ENCODE measurements at regions of chr15 and their contacts with region 1.

Region 1: DNA sequence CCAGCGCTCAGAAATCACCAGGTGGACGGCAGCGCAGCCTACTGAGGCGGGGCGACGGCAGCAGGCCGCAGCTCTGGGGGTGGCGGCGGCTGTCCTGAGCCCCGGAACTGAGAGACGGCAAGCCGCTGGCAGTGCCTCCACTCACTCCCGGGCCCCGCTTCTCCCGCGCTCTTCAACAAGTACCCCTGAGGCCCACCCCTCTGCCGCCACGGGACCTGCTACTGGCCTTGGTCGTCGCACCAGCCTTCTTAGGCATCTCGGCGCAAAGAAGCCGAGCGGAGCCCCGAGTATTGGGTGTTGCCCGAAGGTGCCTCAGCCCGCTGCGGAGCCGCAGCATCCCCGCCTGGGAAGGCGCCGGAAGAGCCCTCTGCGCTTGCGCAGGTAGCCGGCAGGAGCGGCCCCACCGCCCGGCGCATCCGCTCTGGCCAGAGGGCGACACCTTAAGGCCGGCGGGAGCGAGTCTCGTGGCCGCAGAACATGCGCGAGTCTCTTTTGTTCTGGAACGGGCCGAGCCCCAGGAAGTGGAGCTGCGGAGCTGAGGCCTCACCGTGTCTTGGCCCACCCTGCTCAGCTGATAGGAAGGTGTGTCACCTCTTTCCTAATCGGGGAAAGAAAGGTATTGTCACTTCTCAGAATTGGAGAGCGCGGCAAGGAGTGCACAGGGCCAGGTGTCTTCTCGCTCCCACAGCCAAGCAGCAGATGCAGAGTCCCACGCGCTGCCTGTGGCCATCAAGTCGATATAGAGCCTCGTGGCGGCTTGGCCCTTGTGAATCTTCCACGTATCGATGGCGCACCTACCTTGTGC is at the start of gene C15orf40:
- DNase-seq: peak; percentile 24
- H3K4me3 ChIP-seq: peak within 1 kb of the TSS; percentile 90
- CTCF ChIP-seq: peak; percentile 90

Region 2: GRCh38 chr15:82737975-82738374 is 273.5 kb before region 1 on chr15:
- CTCF ChIA-PET with region 1: no interaction called
- POLR2A ChIA-PET with region 1: no interaction called
- DNase-seq: no peak
- H3K4me3 ChIP-seq: no peak overlapping the region
- CTCF ChIP-seq: no peak

Region 3: DNA sequence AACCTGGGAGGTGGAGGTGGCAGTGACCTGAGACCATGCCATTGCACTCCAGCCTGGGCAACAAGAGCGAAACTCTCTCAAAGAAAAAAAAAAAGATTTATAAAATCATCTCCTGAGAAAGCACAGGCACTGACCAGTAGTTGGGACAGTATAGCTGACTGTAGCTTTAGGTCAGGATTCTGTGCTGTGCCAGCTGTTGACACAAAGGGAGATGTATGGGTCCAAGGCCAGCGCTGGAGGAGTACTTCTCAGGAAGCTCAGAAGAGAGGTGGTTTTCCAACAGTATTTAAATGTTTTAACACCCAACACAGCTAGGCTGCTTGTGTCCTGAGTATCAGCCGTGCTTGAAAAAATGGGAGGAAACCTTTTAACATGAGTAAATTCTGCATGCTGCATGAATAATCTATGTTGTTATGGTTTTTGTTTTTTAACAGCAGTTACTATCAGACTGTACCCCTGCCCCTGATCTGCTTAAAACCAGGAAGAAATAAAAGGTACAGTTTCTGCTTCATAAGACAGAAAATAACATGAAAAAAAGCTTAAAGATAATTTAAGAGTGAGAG is 19.0 kb before region 1 on chr15:
- CTCF ChIA-PET with region 1: interaction called, 14 read pairs
- POLR2A ChIA-PET with region 1: no interaction called
- DNase-seq: no peak
- H3K4me3 ChIP-seq: no peak overlapping the region
- CTCF ChIP-seq: no peak

Region 4: DNA sequence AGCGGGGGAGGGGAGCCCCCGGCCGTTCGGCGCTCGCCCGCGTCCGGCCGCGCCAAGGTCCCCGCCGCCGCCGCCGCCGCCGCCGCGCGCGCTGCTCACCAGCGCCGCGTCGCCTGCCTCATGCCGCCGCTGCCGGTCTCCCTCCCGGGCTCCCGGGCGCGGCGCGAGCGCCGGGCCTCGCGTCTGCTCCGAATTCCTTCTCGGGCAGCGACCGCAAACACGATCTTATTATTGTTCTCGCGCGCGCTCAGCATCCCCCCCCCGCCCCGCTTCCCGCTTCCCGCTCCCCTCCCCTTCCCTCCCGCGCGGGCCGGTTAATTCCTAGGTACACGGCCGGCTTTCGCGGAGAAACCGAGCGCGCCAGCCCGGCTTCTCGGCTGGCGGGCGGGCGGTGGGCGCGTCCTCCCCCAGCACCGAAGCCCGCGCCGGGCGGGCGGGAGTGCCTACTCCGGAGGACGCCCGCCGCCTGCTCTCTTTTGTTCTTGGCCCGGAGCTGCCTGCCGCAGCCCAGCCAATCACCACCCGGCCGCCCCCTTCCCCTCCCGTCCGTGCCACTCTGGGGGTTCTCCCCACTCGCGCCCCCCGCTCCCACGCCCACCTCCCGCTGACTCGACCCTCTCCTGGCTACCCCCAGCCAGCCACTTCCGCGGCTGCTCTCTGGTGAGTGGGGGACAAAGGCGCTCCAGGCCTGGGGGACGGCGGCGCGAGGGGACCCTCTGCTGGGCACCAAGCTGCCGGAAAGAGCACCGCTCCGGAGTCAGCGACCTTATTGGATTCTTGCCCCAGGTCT is 196.3 kb after region 1 on chr15 and contains the start of gene HDGFL3:
- CTCF ChIA-PET with region 1: interaction called, 26 read pairs
- POLR2A ChIA-PET with region 1: interaction called, 6 read pairs
- DNase-seq: no peak
- H3K4me3 ChIP-seq: peak within 1 kb of the TSS; percentile 75
- CTCF ChIP-seq: no peak

Measured in AG04449 (cell line).